ENCODE measurements at regions of chr11 and their contacts with region 1.

Region 1: GRCh38 chr11:14764579-14765527 is 121.2 kb downstream of the PDE3B start:
- DNase-seq: peak; percentile 47
- H3K4me3 Mint-ChIP-seq: peak overlapping the region; percentile 52
- H3K27ac Mint-ChIP-seq: no peak overlapping the region
- H3K4me1 Mint-ChIP-seq: peaks cover 34% of the 10 kb centered on the region
- H3K27me3 Mint-ChIP-seq: no peaks in the 10 kb centered on the region

Region 2: DNA sequence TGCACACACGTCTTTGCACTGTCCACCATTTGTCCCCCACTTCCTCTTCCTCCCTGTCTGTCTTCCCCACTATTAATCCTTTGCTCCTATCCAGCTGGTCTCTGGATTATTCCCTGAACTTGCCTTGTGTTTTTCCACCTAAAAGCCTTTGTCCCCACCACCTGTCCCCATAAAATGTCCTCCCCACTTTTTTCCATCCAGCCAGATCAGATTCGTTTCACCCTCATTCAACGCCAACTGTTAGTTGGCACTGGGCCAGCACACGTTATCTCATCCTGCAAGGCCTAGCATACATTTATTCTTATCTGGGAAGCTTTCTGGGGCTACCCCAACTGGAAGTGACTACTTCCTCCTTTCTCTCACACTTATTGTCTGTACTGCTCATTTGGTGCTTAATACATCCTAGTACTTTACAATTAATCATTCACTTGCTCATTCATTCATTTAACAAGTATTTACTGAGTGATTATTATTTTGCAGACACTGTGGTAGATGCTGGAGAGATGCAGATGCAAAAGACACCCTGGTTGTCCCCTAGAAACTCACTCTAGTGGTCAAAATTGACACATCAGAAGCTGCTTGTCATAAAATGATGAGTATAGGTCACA is 1659.5 kb before region 1 on chr11:
- CTCF ChIA-PET with region 1: no interaction called
- POLR2A ChIA-PET with region 1: no interaction called
- DNase-seq: no peak
- H3K4me3 Mint-ChIP-seq: no peak overlapping the region
- H3K27ac Mint-ChIP-seq: no peak overlapping the region
- H3K4me1 Mint-ChIP-seq: no peaks in the 10 kb centered on the region
- H3K27me3 Mint-ChIP-seq: peaks cover 19% of the 10 kb centered on the region

Region 3: GRCh38 chr11:14499554-14500180 is 265.2 kb before region 1 on chr11 and contains the start of gene COPB1:
- CTCF ChIA-PET with region 1: interaction called, 6 read pairs
- POLR2A ChIA-PET with region 1: interaction called, 14 read pairs
- DNase-seq: peak; percentile 96
- H3K4me3 Mint-ChIP-seq: peak within 1 kb of the TSS; percentile 98
- H3K27ac Mint-ChIP-seq: peak within 1 kb of the TSS; percentile 91
- H3K4me1 Mint-ChIP-seq: peaks cover 45% of the 10 kb centered on the region
- H3K27me3 Mint-ChIP-seq: no peaks in the 10 kb centered on the region
- total RNA-seq, gene COPB1: 98.0 to 100.0 TPM

Region 4: DNA sequence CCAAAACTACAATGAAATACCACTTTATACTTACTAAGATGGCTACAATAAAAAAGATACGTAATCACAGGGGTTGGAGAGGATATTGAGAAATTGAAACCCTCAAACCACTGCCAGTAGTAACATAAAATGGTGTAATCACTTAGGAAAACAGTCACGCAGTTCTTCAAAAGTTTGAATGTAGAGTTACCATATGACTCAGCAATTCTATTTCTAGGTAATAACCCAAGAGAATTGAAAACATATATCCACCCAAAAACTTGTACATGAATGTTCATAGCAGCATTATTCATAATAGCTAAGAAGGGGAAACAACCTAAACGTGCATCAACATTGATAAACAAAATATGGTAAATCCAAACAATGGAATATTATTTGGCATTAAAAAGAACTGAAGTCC is 220.2 kb before region 1 on chr11:
- CTCF ChIA-PET with region 1: no interaction called
- POLR2A ChIA-PET with region 1: interaction called, 30 read pairs
- DNase-seq: no peak
- H3K4me3 Mint-ChIP-seq: no peak overlapping the region
- H3K27ac Mint-ChIP-seq: peak overlapping the region; percentile 79
- H3K4me1 Mint-ChIP-seq: peaks cover 37% of the 10 kb centered on the region
- H3K27me3 Mint-ChIP-seq: no peaks in the 10 kb centered on the region

Region 5: DNA sequence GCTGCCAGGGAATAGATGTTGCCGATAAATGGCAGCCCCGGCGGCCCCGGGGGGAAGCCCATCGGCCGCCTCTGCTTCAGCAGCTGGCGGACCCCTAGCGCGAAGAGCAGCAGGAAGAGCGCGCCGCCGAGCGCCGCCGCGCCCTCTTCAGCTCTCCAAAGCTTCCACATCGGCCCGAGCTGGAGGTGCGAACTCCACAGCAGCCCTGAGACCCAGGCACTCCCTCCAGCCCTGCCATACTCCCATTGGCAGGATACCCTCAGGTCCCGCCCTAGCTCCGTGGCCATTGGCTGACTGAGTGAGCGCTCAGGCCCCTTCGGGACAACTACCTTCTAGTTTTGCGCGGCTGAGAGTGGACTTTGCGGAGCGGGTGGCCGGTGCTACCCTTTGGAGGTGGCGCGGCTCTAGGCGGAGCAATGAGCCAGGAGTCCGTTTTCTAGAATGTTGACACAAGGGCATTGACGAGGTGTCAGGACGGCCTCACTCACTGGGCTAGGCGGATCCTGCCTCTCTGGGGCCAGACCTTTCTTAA is 127.2 kb after region 1 on chr11 and contains the start of gene CYP2R1:
- CTCF ChIA-PET with region 1: interaction called, 4 read pairs
- POLR2A ChIA-PET with region 1: interaction called, 52 read pairs
- DNase-seq: peak; percentile 94
- H3K4me3 Mint-ChIP-seq: peak within 1 kb of the TSS; percentile 90
- H3K27ac Mint-ChIP-seq: peak within 1 kb of the TSS; percentile 95
- H3K4me1 Mint-ChIP-seq: peaks cover 57% of the 10 kb centered on the region
- H3K27me3 Mint-ChIP-seq: no peaks in the 10 kb centered on the region
- total RNA-seq, gene CYP2R1: 22.2 TPM

Region 6: GRCh38 chr11:14914541-14914940 is 149.7 kb after region 1 on chr11:
- CTCF ChIA-PET with region 1: no interaction called
- POLR2A ChIA-PET with region 1: no interaction called
- DNase-seq: no peak
- H3K4me3 Mint-ChIP-seq: no peak overlapping the region
- H3K27ac Mint-ChIP-seq: no peak overlapping the region
- H3K4me1 Mint-ChIP-seq: no peaks in the 10 kb centered on the region
- H3K27me3 Mint-ChIP-seq: peaks cover 2% of the 10 kb centered on the region